ENCODE measurements at regions of chr11 and their contacts with region 1.

Region 1: DNA sequence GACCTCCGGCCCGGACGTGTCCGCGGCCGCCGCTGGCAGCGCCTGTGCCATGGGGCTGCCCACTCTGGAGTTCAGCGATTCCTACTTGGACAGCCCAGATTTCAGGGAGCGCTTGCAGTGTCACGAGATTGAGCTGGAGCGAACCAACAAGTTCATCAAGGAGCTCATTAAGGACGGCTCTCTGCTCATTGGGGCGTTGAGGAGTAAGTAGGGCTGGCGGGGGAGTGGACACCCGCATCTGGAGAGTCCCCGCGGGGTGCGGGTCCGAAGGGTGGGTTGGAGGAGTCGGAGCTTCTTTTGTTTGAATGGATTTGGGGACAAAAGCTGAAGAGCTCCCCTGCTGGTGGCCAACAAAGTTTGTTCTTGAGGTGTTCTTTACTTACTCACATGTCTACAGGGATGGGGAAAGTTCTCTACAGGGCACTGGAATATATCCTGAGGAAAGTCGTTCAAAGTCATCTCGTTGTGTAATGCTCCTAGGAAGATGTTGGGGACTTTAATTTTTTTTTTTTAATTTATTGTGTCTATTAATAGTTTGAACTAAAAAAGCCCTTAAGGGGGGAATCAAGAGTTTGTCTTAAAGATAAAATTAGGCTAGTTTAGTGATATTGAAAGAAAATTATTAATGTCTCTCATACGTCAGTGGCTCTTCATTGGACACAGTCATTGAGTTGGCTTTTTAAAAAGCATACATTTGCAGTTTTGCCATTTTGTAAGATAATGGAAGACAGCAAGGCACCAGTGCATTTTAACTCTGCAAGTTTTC is 725 bp downstream of the ARHGAP42 start:
- DNase-seq: peak; percentile 85
- ATAC-seq: peak; percentile 82
- H3K4me3 ChIP-seq: peak overlapping the region; percentile 87
- H3K27ac ChIP-seq: peak overlapping the region; percentile 83
- H3K4me1 ChIP-seq: no peaks in the 10 kb centered on the region
- H3K27me3 ChIP-seq: no peaks in the 10 kb centered on the region
- CTCF ChIP-seq: peak; percentile 63
- POLR2A ChIP-seq: no peak
- RAD21 ChIP-seq: peak; percentile 39

Region 2: GRCh38 chr11:100612766-100613165 is 75.0 kb before region 1 on chr11:
- CTCF ChIA-PET with region 1: no interaction called
- POLR2A ChIA-PET with region 1: no interaction called
- dilution Hi-C with region 1: no loop called
- in situ Hi-C with region 1: no loop called
- intact Hi-C with region 1: no loop called
- DNase-seq: no peak
- ATAC-seq: no peak
- H3K4me3 ChIP-seq: no peak overlapping the region
- H3K27ac ChIP-seq: no peak overlapping the region
- H3K4me1 ChIP-seq: no peaks in the 10 kb centered on the region
- H3K27me3 ChIP-seq: no peaks in the 10 kb centered on the region
- CTCF ChIP-seq: no peak
- POLR2A ChIP-seq: no peak
- RAD21 ChIP-seq: no peak

Region 3: GRCh38 chr11:100808904-100809491 is 121.2 kb after region 1 on chr11:
- CTCF ChIA-PET with region 1: interaction called, 3 read pairs
- POLR2A ChIA-PET with region 1: no interaction called
- dilution Hi-C with region 1: no loop called
- in situ Hi-C with region 1: no loop called
- intact Hi-C with region 1: loop called (anchors 5 kb)
- DNase-seq: peak; percentile 76
- ATAC-seq: peak; percentile 72
- H3K4me3 ChIP-seq: no peak overlapping the region
- H3K27ac ChIP-seq: no peak overlapping the region
- H3K4me1 ChIP-seq: peaks cover 6% of the 10 kb centered on the region
- H3K27me3 ChIP-seq: no peaks in the 10 kb centered on the region
- CTCF ChIP-seq: no peak
- POLR2A ChIP-seq: no peak
- RAD21 ChIP-seq: no peak

Region 4: GRCh38 chr11:100821198-100821597 is 133.4 kb after region 1 on chr11:
- CTCF ChIA-PET with region 1: interaction called, 4 read pairs
- POLR2A ChIA-PET with region 1: interaction called, 11 read pairs
- dilution Hi-C with region 1: no loop called
- in situ Hi-C with region 1: no loop called
- intact Hi-C with region 1: no loop called
- DNase-seq: no peak
- ATAC-seq: no peak
- H3K4me3 ChIP-seq: no peak overlapping the region
- H3K27ac ChIP-seq: no peak overlapping the region
- H3K4me1 ChIP-seq: peaks cover 1% of the 10 kb centered on the region; the same call in 1 of the 2 replicates
- H3K27me3 ChIP-seq: no peaks in the 10 kb centered on the region
- CTCF ChIP-seq: no peak
- POLR2A ChIP-seq: no peak
- RAD21 ChIP-seq: no peak